PC-9 (cell line): ENCODE measurements at regions of chr1 and their contacts with region 1.

Region 1: GRCh38 chr1:164651351-164651951 is 92.5 kb downstream of the PBX1 start:
- DNase-seq: peak; percentile 72 to 92
- H3K4me3 ChIP-seq: no peak overlapping the region
- H3K27ac ChIP-seq: peak overlapping the region; percentile 98
- H3K4me1 ChIP-seq: peaks cover 78% of the 10 kb centered on the region
- H3K27me3 ChIP-seq: no peaks in the 10 kb centered on the region
- CTCF ChIP-seq: no peak

Region 2: GRCh38 chr1:164611754-164612642 is 39.5 kb before region 1 on chr1:
- CTCF ChIA-PET with region 1: interaction called, 4 read pairs
- POLR2A ChIA-PET with region 1: interaction called, 8 read pairs
- intact Hi-C with region 1: loop called (anchors 1 kb)
- DNase-seq: peak; percentile 79 to 96
- H3K4me3 ChIP-seq: no peak overlapping the region; the same call in 1 of the 2 replicates
- H3K27ac ChIP-seq: peak overlapping the region; percentile 79
- H3K4me1 ChIP-seq: peaks cover 44% of the 10 kb centered on the region
- H3K27me3 ChIP-seq: no peaks in the 10 kb centered on the region
- CTCF ChIP-seq: no peak

Region 3: GRCh38 chr1:164637461-164638375 is 13.7 kb before region 1 on chr1:
- CTCF ChIA-PET with region 1: no interaction called
- POLR2A ChIA-PET with region 1: interaction called, 5 read pairs
- intact Hi-C with region 1: loop called (anchors 1 kb)
- DNase-seq: peak; percentile 73 to 92
- H3K4me3 ChIP-seq: no peak overlapping the region
- H3K27ac ChIP-seq: peak overlapping the region; percentile 86
- H3K4me1 ChIP-seq: peaks cover 61% of the 10 kb centered on the region
- H3K27me3 ChIP-seq: no peaks in the 10 kb centered on the region
- CTCF ChIP-seq: no peak